Adrenal gland (tissue), 19 donors: ENCODE measurements at regions of chr4 and their contacts with region 1.

Region 1: GRCh38 chr4:113761620-113762185 is at the start of gene CAMK2D:
- DNase-seq: peak; percentile 79 to 94 (median 89)
- H3K4me3 ChIP-seq: peak within 1 kb of the TSS; percentile 54 to 83 (median 76)
- H3K27ac ChIP-seq: peak within 1 kb of the TSS; percentile 86 to 100 (median 93)
- H3K4me1 ChIP-seq: peaks cover 6 to 29% of the 10 kb centered on the region in 2 donors
- H3K27me3 ChIP-seq: no peaks in the 10 kb centered on the region
- CTCF ChIP-seq: peak in 5 of 6 experiments; percentile 33 to 61 (median 40)
- POLR2A ChIP-seq: peak; percentile 15 to 46
- total RNA-seq, gene CAMK2D: 17.3 to 83.9 (median 44.8) TPM

Region 2: DNA sequence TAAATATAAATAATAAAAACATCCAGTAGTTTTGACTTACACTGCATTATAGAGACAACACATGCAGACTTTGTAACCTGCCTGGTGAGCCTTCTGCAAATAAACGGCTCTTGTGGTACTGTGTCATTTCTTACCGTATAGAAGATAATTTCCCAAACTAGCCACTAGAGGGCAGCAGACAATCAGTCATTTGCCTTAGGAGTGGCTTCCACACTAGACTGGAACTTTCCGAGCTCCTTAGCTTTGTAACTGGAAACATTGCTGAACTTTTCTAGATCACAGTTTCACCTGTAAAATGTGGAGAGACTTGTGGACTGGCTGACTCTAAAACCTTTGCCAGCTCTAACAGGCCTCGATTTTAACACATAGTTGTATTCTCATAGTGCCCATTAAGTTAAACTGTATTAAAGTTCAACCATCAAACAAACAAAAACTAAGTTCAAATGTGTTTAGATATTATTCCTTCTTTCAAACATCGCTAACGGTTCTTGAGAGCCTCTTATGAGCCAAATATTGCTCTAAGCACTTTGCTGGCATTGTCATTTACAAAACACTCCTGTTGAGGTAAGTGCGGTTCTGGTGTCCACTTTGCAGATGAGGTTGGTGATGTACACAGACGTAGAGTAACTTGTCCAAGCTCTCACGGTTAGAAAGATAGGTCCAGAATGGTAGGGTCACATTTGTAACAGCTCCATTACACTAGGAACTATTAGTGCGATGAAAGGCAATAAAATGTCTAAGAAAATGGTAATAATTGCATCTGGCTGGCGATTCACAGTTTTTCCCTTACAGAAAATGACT is 366.8 kb before region 1 on chr4:
- intact Hi-C with region 1: loop called (anchors 10 kb)
- DNase-seq: peak; percentile 28 to 75 (median 70)
- H3K4me3 ChIP-seq: no peak overlapping the region
- H3K27ac ChIP-seq: no peak overlapping the region
- H3K4me1 ChIP-seq: no peaks in the 10 kb centered on the region
- H3K27me3 ChIP-seq: no peaks in the 10 kb centered on the region
- CTCF ChIP-seq: peak; percentile 89 to 93 (median 92)
- POLR2A ChIP-seq: no peak

Region 3: GRCh38 chr4:113547487-113548042 is 214.1 kb before region 1 on chr4:
- intact Hi-C with region 1: loop called (anchors 5 to 10 kb)
- DNase-seq: peak; percentile 88 to 97 (median 93)
- H3K4me3 ChIP-seq: no peak overlapping the region
- H3K27ac ChIP-seq: peak overlapping the region in 2 of 5 donors; percentile 46 to 48
- H3K4me1 ChIP-seq: peaks cover 0 to 6% of the 10 kb centered on the region in 2 donors
- H3K27me3 ChIP-seq: no peaks in the 10 kb centered on the region
- CTCF ChIP-seq: peak; percentile 96 to 98 (median 96)
- POLR2A ChIP-seq: no peak

Region 4: DNA sequence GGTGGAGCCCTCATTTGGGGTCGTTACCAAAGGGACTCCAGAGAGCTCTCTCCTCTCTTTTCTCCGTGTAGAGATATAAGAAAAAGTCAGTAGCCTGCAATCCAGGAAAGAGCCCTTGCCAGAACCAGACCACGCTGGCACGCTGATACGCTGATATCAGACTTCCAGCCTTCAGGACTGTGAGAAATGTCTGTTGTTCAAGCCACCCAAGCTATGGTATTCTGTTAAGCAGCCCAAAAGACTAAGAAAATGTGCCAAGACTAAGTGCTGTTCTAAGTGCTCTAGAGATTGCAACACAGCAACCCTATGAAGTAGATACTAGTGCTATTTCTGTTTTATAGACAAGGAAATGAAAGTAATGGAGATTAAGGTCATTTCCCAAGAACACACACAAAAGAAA is 205.8 kb before region 1 on chr4:
- intact Hi-C with region 1: loop called in 1 of 2 experiments (anchors 10 kb)
- DNase-seq: peak in 1 of 7 donors; percentile 14
- H3K4me3 ChIP-seq: no peak overlapping the region
- H3K27ac ChIP-seq: no peak overlapping the region
- H3K4me1 ChIP-seq: peaks cover 0 to 6% of the 10 kb centered on the region in 2 donors
- H3K27me3 ChIP-seq: no peaks in the 10 kb centered on the region
- CTCF ChIP-seq: no peak
- POLR2A ChIP-seq: no peak